ENCODE measurements at regions of chr16 and their contacts with region 1.

Region 1: GRCh38 chr16:30526137-30526822 is at the start of gene ZNF768:
- DNase-seq: no peak
- H3K4me3 Mint-ChIP-seq: peak within 1 kb of the TSS; percentile 75
- H3K27ac Mint-ChIP-seq: peak within 1 kb of the TSS; percentile 68
- H3K4me1 Mint-ChIP-seq: peaks cover 40% of the 10 kb centered on the region
- H3K27me3 Mint-ChIP-seq: no peaks in the 10 kb centered on the region
- total RNA-seq, gene ZNF768: 1.9 to 2.6 TPM

Region 2: GRCh38 chr16:30395155-30395991 is 130.9 kb before region 1 on chr16 and contains the start of gene ZNF48:
- CTCF ChIA-PET with region 1: no interaction called
- POLR2A ChIA-PET with region 1: no interaction called
- DNase-seq: peak; percentile 38
- H3K4me3 Mint-ChIP-seq: peak within 1 kb of the TSS; percentile 95
- H3K27ac Mint-ChIP-seq: peak within 1 kb of the TSS; percentile 87
- H3K4me1 Mint-ChIP-seq: peaks cover 38% of the 10 kb centered on the region
- H3K27me3 Mint-ChIP-seq: no peaks in the 10 kb centered on the region
- total RNA-seq, gene ZNF48: 13.7 to 13.9 TPM

Region 3: GRCh38 chr16:30557957-30558788 is 31.9 kb after region 1 on chr16 and contains the start of gene ZNF764:
- CTCF ChIA-PET with region 1: interaction called, 10 read pairs
- POLR2A ChIA-PET with region 1: interaction called, 3 read pairs
- DNase-seq: peak; percentile 98
- H3K4me3 Mint-ChIP-seq: peak within 1 kb of the TSS; percentile 87
- H3K27ac Mint-ChIP-seq: peak within 1 kb of the TSS; percentile 90
- H3K4me1 Mint-ChIP-seq: peaks cover 44% of the 10 kb centered on the region
- H3K27me3 Mint-ChIP-seq: no peaks in the 10 kb centered on the region
- total RNA-seq, gene ZNF764: 17.5 to 18.2 TPM

Region 4: DNA sequence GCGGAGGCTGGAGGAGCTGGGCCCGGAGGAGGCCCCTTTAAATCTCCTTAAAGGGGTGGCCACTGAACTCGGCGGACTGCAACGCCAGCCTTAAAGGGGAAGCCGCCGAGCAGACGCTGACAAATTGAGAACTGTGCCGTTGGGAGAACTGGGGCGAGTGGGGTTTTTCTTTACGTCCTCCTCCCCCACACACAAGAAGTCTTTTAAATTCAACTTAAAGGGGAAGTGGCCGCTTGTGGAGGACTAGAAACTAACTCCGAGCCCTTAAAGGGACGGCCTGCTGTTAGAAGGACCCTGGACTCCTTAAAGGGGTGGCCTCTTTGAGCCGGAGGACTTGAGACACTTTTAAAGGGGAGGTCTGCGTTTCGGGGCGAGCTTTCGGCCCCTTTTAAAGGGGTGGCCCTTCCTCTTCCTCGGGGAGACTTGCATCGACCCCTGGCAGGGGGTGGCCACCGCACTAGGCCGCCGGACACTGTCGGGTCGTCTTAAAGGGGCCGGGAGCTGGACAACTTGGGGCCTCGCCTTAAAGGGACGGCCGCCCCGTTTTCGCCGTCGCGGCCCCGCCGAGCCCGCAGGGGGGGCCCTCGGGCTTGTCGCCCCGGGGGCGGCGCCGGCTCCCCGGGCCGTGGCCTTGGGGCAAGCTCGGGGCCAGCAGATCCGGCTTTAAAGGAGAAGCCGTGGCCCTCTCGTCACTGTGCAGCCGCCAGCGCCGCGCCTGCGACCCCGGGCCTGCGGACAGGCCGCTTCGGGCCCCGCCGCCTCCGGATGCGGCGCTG is 132.6 kb after region 1 on chr16:
- CTCF ChIA-PET with region 1: no interaction called
- POLR2A ChIA-PET with region 1: no interaction called
- DNase-seq: no peak
- H3K4me3 Mint-ChIP-seq: peak overlapping the region; percentile 93
- H3K27ac Mint-ChIP-seq: peak overlapping the region; percentile 100
- H3K4me1 Mint-ChIP-seq: peaks cover 56% of the 10 kb centered on the region
- H3K27me3 Mint-ChIP-seq: no peaks in the 10 kb centered on the region